Endothelial cell of umbilical vein (primary cell): ENCODE measurements at regions of chr6 and their contacts with region 1.

Region 1: GRCh38 chr6:137707590-137708360 is 159.3 kb upstream of the TNFAIP3 start:
- DNase-seq: peak; percentile 68
- H3K4me3 ChIP-seq: peak overlapping the region in 1 of 3 experiments; percentile 30
- H3K27ac ChIP-seq: no peak overlapping the region
- H3K4me1 ChIP-seq: peaks cover 4% of the 10 kb centered on the region
- H3K27me3 ChIP-seq: no peaks in the 10 kb centered on the region
- CTCF ChIP-seq: peak; percentile 60 to 68
- POLR2A ChIP-seq: no peak

Region 2: GRCh38 chr6:137415127-137415833 is 292.5 kb before region 1 on chr6:
- CTCF ChIA-PET with region 1: no interaction called
- POLR2A ChIA-PET with region 1: no interaction called
- dilution Hi-C with region 1: no loop called
- intact Hi-C with region 1: no loop called
- DNase-seq: peak; percentile 73
- H3K4me3 ChIP-seq: peak overlapping the region in 2 of 3 experiments; percentile 25 to 59
- H3K27ac ChIP-seq: no peak overlapping the region
- H3K4me1 ChIP-seq: no peaks in the 10 kb centered on the region
- H3K27me3 ChIP-seq: peaks cover 19 to 28% of the 10 kb centered on the region in 2 experiments
- CTCF ChIP-seq: peak; percentile 56 to 71
- POLR2A ChIP-seq: no peak

Region 3: DNA sequence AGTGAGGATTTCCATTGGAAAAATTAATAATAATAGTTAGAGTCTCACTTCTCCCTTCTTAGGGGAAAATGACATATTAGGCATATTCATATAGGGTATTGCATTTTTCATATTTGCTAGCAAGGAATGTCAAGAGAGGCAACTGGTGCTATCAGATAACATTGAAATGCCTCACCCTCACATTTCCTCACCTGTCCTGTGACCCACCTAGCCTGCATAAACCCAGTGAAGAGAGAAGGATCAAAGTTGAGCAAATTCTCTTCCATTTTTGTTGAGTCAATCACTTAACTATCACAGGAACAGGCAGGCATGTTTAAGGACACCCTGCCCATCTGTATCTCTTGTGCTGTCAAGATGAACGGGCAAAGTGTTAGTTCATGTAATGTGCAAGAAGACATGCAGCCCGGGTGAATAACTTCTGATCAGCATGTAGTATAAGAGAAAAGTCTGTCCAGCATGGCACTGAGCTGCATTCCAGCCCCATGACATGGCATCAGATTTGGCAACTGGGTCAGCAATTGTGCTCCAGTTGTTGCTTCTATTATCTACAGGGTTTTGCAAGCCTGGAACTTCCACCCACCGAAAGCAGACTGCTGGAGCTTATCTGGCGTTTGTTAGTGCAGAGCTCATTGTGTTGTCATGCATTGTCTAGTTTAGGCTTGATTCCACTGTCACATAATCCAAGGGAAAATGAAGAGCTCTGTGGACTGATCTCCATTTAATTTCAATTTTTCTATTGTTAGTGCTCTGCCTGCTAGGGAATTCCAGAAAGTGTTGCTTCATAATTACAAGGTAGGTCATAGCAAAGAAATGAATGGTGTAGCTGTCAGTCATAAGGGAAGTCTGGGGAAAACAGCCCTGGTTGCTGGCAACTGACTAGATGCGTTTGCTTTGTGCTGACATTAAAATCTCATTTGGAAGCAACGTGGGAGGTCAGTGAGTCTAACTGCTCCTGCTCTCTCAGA is 20.9 kb after region 1 on chr6:
- CTCF ChIA-PET with region 1: interaction called, 14 read pairs
- POLR2A ChIA-PET with region 1: no interaction called
- dilution Hi-C with region 1: no loop called
- intact Hi-C with region 1: no loop called
- DNase-seq: peak; percentile 31
- H3K4me3 ChIP-seq: no peak overlapping the region
- H3K27ac ChIP-seq: no peak overlapping the region
- H3K4me1 ChIP-seq: peaks cover 9% of the 10 kb centered on the region
- H3K27me3 ChIP-seq: no peaks in the 10 kb centered on the region
- CTCF ChIP-seq: no peak
- POLR2A ChIP-seq: no peak

Region 4: DNA sequence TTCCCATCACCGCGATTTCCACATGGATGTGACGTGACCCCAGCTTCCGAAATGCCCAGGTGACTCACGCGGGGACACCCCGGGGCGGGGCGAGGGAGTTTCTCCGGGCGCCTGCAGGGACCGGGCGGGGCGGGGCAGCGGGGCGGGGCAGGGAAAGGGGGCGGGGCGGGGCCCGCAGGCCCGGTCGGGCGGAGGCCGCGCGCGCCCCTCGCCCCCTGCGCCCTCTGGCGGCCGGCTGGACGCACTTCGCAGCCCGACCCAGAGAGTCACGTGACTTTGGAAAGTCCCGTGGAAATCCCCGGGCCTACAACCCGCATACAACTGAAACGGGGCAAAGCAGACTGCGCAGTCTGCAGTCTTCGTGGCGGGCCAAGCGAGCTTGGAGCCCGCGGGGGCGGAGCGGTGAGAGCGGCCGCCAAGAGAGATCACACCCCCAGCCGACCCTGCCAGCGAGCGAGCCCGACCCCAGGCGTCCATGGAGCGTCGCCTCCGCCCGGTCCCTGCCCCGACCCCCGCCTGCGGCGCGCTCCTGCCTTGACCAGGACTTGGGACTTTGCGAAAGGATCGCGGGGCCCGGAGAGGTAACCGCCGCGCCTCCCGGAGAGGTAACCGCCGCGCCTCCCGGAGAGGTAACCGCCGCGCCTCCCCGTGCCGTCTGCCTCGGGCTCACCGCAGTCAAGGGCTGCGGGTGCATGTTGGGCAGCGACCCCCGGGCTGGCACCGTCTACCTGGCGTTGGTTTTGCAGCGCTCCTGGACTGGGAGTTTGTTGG is 159.3 kb after region 1 on chr6 and contains the start of gene TNFAIP3:
- CTCF ChIA-PET with region 1: interaction called, 64 read pairs
- POLR2A ChIA-PET with region 1: interaction called, 4 read pairs
- dilution Hi-C with region 1: no loop called
- intact Hi-C with region 1: loop called (anchors 1 kb)
- DNase-seq: peak; percentile 96
- H3K4me3 ChIP-seq: peak within 1 kb of the TSS; percentile 54 to 88 (median 63)
- H3K27ac ChIP-seq: peak within 1 kb of the TSS; percentile 65
- H3K4me1 ChIP-seq: peaks cover 24% of the 10 kb centered on the region
- H3K27me3 ChIP-seq: no peaks in the 10 kb centered on the region
- CTCF ChIP-seq: peak; percentile 70 to 81
- POLR2A ChIP-seq: peak; percentile 45
- total RNA-seq, gene TNFAIP3: 4.2 and 8.6 TPM in 2 replicates

Region 5: GRCh38 chr6:137944793-137945498 is 237.2 kb after region 1 on chr6:
- CTCF ChIA-PET with region 1: interaction called, 103 read pairs
- POLR2A ChIA-PET with region 1: no interaction called
- dilution Hi-C with region 1: no loop called
- intact Hi-C with region 1: loop called (anchors 1 kb)
- DNase-seq: peak; percentile 56
- H3K4me3 ChIP-seq: no peak overlapping the region
- H3K27ac ChIP-seq: no peak overlapping the region
- H3K4me1 ChIP-seq: no peaks in the 10 kb centered on the region
- H3K27me3 ChIP-seq: no peaks in the 10 kb centered on the region
- CTCF ChIP-seq: peak; percentile 58 to 59
- POLR2A ChIP-seq: no peak

Region 6: GRCh38 chr6:138001750-138002349 is 294.1 kb after region 1 on chr6:
- CTCF ChIA-PET with region 1: interaction called, 72 read pairs
- POLR2A ChIA-PET with region 1: no interaction called
- dilution Hi-C with region 1: no loop called
- intact Hi-C with region 1: loop called (anchors 1 kb)
- DNase-seq: peak; percentile 62
- H3K4me3 ChIP-seq: no peak overlapping the region
- H3K27ac ChIP-seq: no peak overlapping the region
- H3K4me1 ChIP-seq: no peaks in the 10 kb centered on the region
- H3K27me3 ChIP-seq: no peaks in the 10 kb centered on the region
- CTCF ChIP-seq: peak; percentile 69 to 82
- POLR2A ChIP-seq: no peak